AG04450 (cell line): ENCODE measurements at regions of chr19 and their contacts with region 1.

Region 1: DNA sequence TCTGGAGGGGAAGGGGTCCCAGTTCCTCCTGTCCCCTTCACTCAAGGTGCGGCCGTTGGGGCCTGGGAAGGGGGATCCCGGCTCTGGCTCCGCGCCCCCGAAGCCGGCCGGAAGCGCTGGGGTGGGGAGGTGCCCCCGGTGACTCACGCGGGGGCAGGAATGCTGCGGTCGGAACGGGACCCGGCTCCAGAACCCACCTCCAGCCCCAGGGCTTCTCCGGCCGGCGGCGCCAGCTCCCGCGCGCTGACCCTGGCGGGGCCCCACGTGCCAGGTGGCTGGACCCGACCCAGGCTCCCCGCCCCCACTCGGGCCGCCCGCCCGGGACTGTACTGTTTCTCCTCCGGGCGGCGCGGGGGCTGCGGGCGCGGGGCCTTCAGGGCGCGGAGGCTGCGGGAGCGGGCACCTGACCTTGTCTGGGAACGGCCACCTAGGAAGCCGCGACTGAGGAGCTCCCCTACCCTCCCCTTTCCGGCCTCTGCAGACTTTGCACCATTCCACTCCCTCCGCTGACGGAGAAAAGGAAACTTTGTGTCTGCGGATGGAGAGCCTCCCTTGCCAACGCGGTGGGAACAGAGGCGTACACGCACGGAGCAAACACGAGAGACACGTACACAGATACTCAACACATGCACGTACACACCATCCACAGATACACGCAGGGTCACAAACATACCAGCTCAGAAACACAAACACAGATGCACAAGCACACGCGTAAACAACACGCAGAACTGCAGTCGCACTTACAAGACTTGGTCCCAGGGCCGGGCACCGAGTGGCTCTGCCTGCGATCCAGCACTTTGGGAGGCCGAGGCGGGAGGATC is 7.2 kb downstream of the AXL start:
- DNase-seq: peak; percentile 85
- H3K4me3 ChIP-seq: peak overlapping the region; percentile 52
- H3K27ac ChIP-seq: peak overlapping the region; percentile 97
- H3K27me3 ChIP-seq: no peaks in the 10 kb centered on the region
- CTCF ChIP-seq: no peak

Region 2: DNA sequence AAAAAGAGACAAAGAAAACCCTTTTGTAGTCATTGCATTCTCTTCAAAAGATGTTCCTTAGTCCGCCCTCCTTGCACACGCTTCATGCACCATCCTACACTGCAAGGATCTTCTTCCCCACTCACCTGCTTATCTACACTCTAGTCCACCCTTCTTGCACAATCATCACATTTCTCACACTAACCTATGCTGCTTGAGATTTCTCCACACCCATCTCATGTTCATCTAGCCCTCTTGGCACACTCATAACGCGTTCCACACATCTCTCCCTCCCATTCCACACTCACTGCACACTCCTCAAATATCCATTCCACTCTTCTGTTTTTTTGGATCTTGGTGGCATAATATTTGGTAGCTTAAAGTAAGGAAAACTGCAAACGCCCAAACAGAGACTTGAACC is 15.6 kb after region 1 on chr19:
- CTCF ChIA-PET with region 1: no interaction called
- POLR2A ChIA-PET with region 1: interaction called, 15 read pairs
- DNase-seq: no peak
- H3K4me3 ChIP-seq: no peak overlapping the region
- H3K27ac ChIP-seq: no peak overlapping the region
- H3K27me3 ChIP-seq: no peaks in the 10 kb centered on the region
- CTCF ChIP-seq: no peak